Natural killer cell (primary cell): ENCODE measurements at regions of chr15 and their contacts with region 1.

Region 1: DNA sequence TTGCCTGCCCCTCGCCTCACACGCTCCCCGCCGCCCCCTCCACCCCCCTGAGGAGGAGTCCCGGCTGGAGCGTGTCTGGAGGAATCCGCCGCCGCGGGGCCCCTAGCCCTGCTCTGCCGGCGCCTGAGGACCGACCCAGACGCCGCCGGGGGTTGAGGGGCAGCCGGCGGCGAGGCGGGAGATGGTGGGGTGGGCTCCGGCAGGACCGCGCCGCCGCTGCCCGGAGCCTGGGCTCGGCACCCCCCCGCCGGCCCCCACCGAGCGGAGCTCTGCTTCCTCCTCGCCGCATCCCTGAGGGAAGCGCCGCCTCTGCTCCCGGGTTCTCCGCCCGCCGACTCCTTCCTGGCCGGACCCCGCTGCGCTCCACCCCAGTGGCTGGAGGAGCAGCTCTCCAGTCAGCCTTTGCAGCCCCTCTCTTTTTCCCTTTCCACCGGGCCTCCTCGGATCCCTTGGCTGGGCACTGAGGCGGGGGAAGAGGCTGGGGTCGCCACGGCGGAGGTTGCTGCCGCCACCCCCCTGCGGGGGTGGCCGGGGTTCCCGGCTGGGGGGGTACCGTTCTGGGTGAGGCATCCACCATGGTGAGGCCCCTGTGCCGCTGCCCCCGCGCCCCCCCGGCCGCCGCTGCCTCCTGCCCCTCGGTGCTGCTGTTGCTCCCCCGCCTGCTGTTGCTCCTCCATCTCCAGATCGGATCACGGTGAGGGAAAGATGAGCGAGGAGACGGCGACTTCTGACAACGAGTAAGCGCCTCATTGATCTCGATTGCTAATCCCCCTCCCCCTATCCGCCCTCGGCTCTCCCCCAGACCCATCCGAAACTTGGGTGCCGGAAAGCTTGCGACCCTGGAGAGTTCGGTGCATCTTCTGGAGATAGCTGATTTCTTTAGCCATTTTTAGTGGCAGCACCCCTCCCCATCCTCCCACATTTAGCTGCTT is at the start of gene SPRED1:
- DNase-seq: peak; percentile 29 to 40
- ATAC-seq: peak in 2 of 3 donors; percentile 23 to 28
- H3K4me3 ChIP-seq: peak within 1 kb of the TSS; percentile 72
- H3K4me3 Mint-ChIP-seq: peak within 1 kb of the TSS; percentile 96
- H3K27ac ChIP-seq: no peak within 1 kb of the TSS
- H3K27ac Mint-ChIP-seq: peak within 1 kb of the TSS; percentile 81 to 85
- H3K4me1 ChIP-seq: peaks cover 18% of the 10 kb centered on the region
- H3K4me1 Mint-ChIP-seq: peaks cover 29 to 30% of the 10 kb centered on the region in 2 donors
- H3K27me3 ChIP-seq: peaks cover 6% of the 10 kb centered on the region
- H3K27me3 Mint-ChIP-seq: peaks cover 4 to 19% of the 10 kb centered on the region in 2 donors
- CTCF ChIP-seq: no peak
- total RNA-seq, gene SPRED1: 1.1 to 2.0 (median 1.5) TPM

Region 2: GRCh38 chr15:38308797-38309196 is 56.0 kb after region 1 on chr15:
- intact Hi-C with region 1: loop called (anchors 5 kb)
- DNase-seq: peak in 1 of 2 donors; percentile 3
- ATAC-seq: no peak
- H3K4me3 ChIP-seq: no peak overlapping the region
- H3K4me3 Mint-ChIP-seq: no peak overlapping the region
- H3K27ac ChIP-seq: no peak overlapping the region
- H3K27ac Mint-ChIP-seq: no peak overlapping the region
- H3K4me1 ChIP-seq: no peaks in the 10 kb centered on the region
- H3K4me1 Mint-ChIP-seq: peaks cover 11 to 21% of the 10 kb centered on the region in 2 donors
- H3K27me3 ChIP-seq: no peaks in the 10 kb centered on the region
- H3K27me3 Mint-ChIP-seq: no peaks in the 10 kb centered on the region
- CTCF ChIP-seq: no peak